ENCODE measurements at regions of chr20 and their contacts with region 1.

Region 1: GRCh38 chr20:38893565-38894090 is 32.6 kb upstream of the FAM83D start:
- DNase-seq: no peak

Region 2: DNA sequence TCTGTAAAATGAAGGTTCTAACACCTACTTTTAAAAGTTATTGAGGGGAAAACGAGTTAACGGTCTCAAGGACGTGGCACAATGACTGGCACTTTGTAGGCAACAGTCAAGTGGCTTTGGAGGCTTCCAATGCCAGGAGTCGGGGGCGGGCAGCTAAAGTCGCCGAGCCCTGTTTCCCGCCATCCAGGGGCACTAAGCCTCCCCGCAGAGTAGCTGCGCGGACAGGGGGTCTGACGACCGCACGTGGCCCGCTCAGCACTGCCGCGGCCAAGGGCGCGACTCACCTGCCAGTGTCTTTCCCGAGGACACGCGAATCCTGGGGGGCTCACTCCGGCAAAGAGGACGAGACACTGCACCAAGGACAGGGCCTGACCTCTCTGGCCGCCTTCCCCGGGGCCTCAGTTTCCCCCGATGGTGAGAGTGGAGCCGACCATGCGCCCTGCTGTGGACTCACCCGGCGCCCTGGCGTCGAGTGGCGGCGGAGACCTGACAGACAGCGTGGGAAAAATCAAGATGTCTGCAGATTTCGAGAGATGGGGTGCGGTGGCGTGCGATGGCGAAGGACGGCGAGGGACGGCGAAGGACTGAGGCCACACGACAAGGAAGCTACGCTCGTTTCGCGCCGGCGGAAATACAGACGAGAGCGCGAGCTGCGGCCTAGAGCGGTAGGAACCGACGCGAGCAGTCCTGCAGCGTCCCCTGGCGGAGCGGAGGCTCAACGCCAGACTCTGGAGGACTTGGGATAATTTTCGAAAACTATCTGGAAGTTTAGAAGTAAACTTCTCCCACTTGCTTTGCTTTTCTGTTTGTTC is 458.7 kb before region 1 on chr20 and contains the start of gene SNHG17:
- intact Hi-C with region 1: no loop called
- DNase-seq: peak; percentile 95
- total RNA-seq, gene SNHG17: 10.6 TPM

Region 3: DNA sequence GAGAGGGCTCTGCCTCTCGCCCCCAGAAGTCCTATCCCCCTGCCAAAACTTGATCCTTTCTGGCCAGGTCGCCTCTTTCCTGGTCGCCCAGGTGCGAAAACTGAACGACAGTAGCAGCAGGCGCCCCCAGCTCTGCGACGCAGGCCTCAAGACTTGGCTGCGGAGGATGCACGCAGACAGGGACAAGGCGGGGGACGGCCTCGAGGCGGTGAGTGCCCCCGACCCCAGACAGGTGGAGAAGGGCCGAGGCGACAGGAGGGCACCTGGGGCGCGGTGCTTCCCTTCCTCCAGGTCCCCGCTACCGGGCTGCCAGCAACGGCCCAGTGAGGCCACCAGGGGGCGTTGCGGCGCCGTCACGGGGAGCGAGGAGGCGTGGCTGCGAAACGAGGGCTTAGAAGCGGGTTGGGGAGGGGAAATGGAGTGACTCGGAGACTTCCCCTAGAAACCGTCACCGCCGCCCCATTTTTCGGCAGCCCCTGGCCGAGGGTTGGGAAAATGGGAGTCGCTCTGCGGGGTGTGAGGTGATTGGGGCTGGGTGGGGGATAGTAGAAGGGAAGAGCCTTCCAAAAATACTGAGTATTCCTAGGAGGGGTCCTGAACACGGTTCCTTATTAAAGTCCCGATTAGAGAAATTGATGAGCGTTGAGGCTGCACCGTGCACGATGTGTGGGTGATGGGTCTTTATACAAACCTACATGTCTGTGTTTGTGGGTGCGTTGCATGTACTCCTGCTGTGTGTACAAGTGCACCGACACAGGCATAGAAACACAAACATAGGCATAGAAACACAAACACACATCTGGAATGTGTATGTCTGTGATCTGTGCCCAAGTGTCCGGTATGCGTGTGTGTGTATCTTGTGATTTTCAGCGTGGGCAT is 247.4 kb before region 1 on chr20:
- intact Hi-C with region 1: loop called (anchors 5 kb)
- DNase-seq: peak; percentile 91

Region 4: DNA sequence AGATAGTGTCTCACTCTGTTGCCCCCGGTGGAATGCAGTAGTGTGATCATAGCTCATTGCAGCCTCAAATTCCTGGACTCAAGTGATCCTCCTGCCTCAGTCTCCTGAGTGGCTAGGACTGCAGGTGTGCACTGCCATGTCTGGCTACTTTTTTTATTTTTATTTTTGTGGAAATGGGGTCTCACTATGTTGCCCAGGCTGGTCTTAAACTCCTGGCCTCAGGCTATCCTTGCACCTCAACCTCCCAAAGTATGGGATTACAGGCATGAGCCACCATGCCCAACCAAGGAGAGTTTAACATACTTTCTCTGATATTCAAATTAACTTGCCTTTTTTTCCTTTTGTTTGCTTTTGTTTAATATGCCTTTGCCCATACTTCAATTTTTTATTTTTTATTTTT is 155.7 kb before region 1 on chr20:
- intact Hi-C with region 1: no loop called
- DNase-seq: no peak

Region 5: GRCh38 chr20:38748097-38748860 is 145.3 kb before region 1 on chr20 and contains the start of gene ACTR5:
- intact Hi-C with region 1: loop called (anchors 10 kb)
- DNase-seq: peak; percentile 98
- total RNA-seq, gene ACTR5: 3.0 TPM

Region 6: DNA sequence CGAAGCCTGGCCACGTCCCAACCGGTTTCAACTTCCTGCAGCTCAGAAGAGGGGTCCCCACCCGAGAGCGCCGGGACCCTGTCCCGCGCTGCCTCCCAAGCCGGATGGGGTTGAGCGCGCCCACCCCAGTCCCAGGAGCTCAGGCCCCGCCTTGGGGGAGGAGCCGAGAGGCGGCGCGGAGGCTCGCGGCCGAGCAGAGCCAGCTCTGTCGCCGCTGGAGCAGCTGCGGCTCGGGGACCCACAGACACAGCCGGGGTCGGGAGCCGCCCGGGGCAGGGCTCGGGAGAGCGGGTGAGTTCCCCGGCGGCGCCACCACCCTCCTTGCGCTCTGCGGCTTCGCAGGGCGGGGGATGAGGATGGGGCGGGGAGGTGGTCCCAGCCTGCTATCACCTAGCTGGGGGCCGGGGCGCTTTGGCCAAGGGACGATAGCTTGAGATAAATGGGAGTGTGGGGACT is 88.1 kb before region 1 on chr20 and contains the start of gene PPP1R16B:
- intact Hi-C with region 1: loop called (anchors 5 kb)
- DNase-seq: peak; percentile 78
- total RNA-seq, gene PPP1R16B: 1.7 TPM

Region 7: DNA sequence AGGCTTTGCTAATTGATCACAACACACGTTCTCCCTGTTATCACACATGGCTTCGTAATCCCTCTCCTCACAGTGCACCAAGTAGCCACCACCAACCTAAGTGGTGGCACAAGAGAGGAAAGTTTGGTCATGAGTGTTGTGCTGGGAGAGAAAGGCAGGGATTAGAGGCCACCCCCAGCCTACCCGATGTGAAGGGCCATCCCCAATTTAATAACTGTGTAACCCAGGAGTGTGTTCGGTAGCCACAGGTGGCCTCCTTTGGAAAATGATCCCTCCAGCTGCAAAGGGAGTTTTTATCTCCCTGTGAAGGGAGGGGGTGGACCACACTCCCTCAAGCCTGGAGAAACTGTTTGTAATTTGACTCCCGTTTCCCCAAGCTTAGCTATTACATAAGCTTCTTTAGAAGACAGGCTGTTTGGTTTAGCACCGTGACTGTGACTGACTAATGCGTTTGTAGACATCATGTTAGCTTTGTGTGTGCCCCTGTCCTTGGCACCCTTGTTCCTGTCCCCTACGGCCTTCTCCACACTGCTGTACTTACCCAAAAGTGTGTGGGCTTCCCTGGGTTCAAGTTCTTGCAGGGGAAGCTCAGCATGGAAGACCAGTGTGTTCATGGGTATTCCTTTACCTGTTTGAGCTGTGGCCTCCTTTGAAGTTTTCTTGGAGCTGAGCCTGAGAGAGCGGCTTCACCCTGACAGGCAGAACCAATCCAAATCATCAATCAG is 67.6 kb before region 1 on chr20:
- intact Hi-C with region 1: no loop called
- DNase-seq: no peak